GM12878 (cell line): ENCODE measurements at regions of chr4 and their contacts with region 1.

Region 1: GRCh38 chr4:6873792-6874461 is 35.7 kb upstream of the TBC1D14 start:
- DNase-seq: no peak
- ATAC-seq: peak; percentile 96
- H3K4me3 ChIP-seq: no peak overlapping the region
- H3K27ac ChIP-seq: no peak overlapping the region
- H3K4me1 ChIP-seq: no peaks in the 10 kb centered on the region
- H3K27me3 ChIP-seq: no peaks in the 10 kb centered on the region
- CTCF ChIP-seq: peak; percentile 92 to 95 (median 95)
- EP300 ChIP-seq: no peak
- POLR2A ChIP-seq: no peak
- RAD21 ChIP-seq: peak; percentile 96

Region 2: GRCh38 chr4:6673660-6674499 is 200.0 kb before region 1 on chr4:
- CTCF ChIA-PET with region 1: interaction called, 23 read pairs
- POLR2A ChIA-PET with region 1: no interaction called
- RAD21 ChIA-PET with region 1: interaction called, 7 read pairs
- SMC1A ChIA-PET with region 1: interaction called, 6 read pairs
- in situ Hi-C with region 1: no loop called
- intact Hi-C with region 1: no loop called
- DNase-seq: peak; percentile 80
- ATAC-seq: peak; percentile 92
- H3K4me3 ChIP-seq: peak overlapping the region; percentile 74
- H3K27ac ChIP-seq: peak overlapping the region; percentile 45
- H3K4me1 ChIP-seq: peaks cover 6% of the 10 kb centered on the region; the same call in 1 of the 2 replicates
- H3K27me3 ChIP-seq: no peaks in the 10 kb centered on the region
- CTCF ChIP-seq: no peak
- EP300 ChIP-seq: peak in 1 of 2 experiments; percentile 27; a peak in 1 of 4 replicates
- POLR2A ChIP-seq: peak; percentile 92
- RAD21 ChIP-seq: no peak

Region 3: GRCh38 chr4:6723716-6724250 is 150.1 kb before region 1 on chr4:
- CTCF ChIA-PET with region 1: interaction called, 277 read pairs
- POLR2A ChIA-PET with region 1: interaction called, 14 read pairs
- RAD21 ChIA-PET with region 1: interaction called, 155 read pairs
- SMC1A ChIA-PET with region 1: interaction called, 153 read pairs
- in situ Hi-C with region 1: loop called (anchors 5 kb)
- intact Hi-C with region 1: loop called (anchors 1 kb)
- DNase-seq: no peak
- ATAC-seq: no peak
- H3K4me3 ChIP-seq: no peak overlapping the region
- H3K27ac ChIP-seq: no peak overlapping the region
- H3K4me1 ChIP-seq: peaks cover 7% of the 10 kb centered on the region
- H3K27me3 ChIP-seq: no peaks in the 10 kb centered on the region
- CTCF ChIP-seq: no peak
- EP300 ChIP-seq: no peak
- POLR2A ChIP-seq: no peak
- RAD21 ChIP-seq: no peak

Region 4: GRCh38 chr4:6768539-6768905 is 105.4 kb before region 1 on chr4:
- CTCF ChIA-PET with region 1: interaction called, 300 read pairs
- POLR2A ChIA-PET with region 1: interaction called, 4 read pairs
- RAD21 ChIA-PET with region 1: interaction called, 20 read pairs
- SMC1A ChIA-PET with region 1: interaction called, 19 read pairs
- in situ Hi-C with region 1: no loop called
- intact Hi-C with region 1: no loop called
- DNase-seq: no peak
- ATAC-seq: no peak
- H3K4me3 ChIP-seq: no peak overlapping the region
- H3K27ac ChIP-seq: no peak overlapping the region
- H3K4me1 ChIP-seq: peaks cover 14% of the 10 kb centered on the region
- H3K27me3 ChIP-seq: no peaks in the 10 kb centered on the region
- CTCF ChIP-seq: no peak
- EP300 ChIP-seq: no peak
- POLR2A ChIP-seq: no peak
- RAD21 ChIP-seq: no peak

Region 5: GRCh38 chr4:6824772-6825402 is 49.0 kb before region 1 on chr4:
- CTCF ChIA-PET with region 1: interaction called, 8 read pairs
- POLR2A ChIA-PET with region 1: no interaction called
- RAD21 ChIA-PET with region 1: interaction called, 4 read pairs
- SMC1A ChIA-PET with region 1: interaction called, 11 read pairs
- in situ Hi-C with region 1: no loop called
- intact Hi-C with region 1: no loop called
- DNase-seq: no peak
- ATAC-seq: no peak
- H3K4me3 ChIP-seq: no peak overlapping the region
- H3K27ac ChIP-seq: no peak overlapping the region
- H3K4me1 ChIP-seq: 0 out of 2 replicates have a peak, but pooled peaks cover 3% of the 10 kb centered on the region
- H3K27me3 ChIP-seq: no peaks in the 10 kb centered on the region
- CTCF ChIP-seq: no peak
- EP300 ChIP-seq: no peak
- POLR2A ChIP-seq: no peak
- RAD21 ChIP-seq: no peak

Region 6: DNA sequence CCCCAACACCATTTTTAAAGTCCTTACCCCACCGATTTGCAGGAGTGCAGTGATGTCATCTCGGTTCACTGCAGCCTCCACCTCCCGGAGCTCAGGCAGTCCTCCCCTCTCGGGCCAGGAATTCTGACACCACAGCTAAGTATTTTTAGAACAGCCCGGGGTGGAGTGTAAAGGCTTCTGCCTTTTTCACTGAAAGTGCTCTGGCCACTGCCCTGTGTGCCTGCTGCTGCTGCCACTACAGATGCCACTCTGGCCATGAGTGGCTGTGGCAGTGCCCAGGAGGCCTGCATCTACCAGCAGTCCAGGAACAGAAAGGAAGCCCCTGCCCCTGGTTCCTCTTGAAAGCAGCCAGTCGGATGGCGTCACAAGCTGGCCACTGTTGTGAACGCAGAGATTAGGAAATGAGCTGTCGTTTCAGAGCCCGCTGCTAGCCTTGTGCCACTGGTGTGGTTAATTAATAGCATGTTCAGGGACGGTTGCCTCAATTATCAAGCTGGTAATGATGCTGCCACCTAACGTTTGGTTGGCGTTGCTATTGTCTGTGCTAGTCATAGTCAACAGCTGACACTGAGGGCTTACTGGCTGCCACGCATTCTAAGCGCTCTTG is 12.1 kb after region 1 on chr4:
- CTCF ChIA-PET with region 1: interaction called, 64 read pairs
- POLR2A ChIA-PET with region 1: no interaction called
- RAD21 ChIA-PET with region 1: interaction called, 15 read pairs
- SMC1A ChIA-PET with region 1: interaction called, 18 read pairs
- in situ Hi-C with region 1: no loop called
- intact Hi-C with region 1: no loop called
- DNase-seq: peak; percentile 34
- ATAC-seq: peak; percentile 94
- H3K4me3 ChIP-seq: no peak overlapping the region
- H3K27ac ChIP-seq: no peak overlapping the region
- H3K4me1 ChIP-seq: no peaks in the 10 kb centered on the region
- H3K27me3 ChIP-seq: no peaks in the 10 kb centered on the region
- CTCF ChIP-seq: peak; percentile 26 to 51 (median 35); a peak in 4 of 6 replicates
- EP300 ChIP-seq: no peak
- POLR2A ChIP-seq: no peak
- RAD21 ChIP-seq: 0 out of 2 replicates have a peak, but pooled peaks have one; percentile 1

Region 7: GRCh38 chr4:6909073-6909965 is 35.4 kb after region 1 on chr4 and contains the start of gene TBC1D14:
- CTCF ChIA-PET with region 1: interaction called, 13 read pairs
- POLR2A ChIA-PET with region 1: no interaction called
- RAD21 ChIA-PET with region 1: interaction called, 9 read pairs
- SMC1A ChIA-PET with region 1: interaction called, 4 read pairs
- in situ Hi-C with region 1: no loop called
- intact Hi-C with region 1: no loop called
- DNase-seq: no peak
- ATAC-seq: peak; percentile 94
- H3K4me3 ChIP-seq: peak within 1 kb of the TSS; percentile 97
- H3K27ac ChIP-seq: peak within 1 kb of the TSS; percentile 96
- H3K4me1 ChIP-seq: peaks cover 17% of the 10 kb centered on the region
- H3K27me3 ChIP-seq: 0 out of 4 replicates have a peak, but pooled peaks cover 0 to 3% of the 10 kb centered on the region in 2 experiments
- CTCF ChIP-seq: no peak; a peak in 2 of 6 replicates
- EP300 ChIP-seq: no peak
- POLR2A ChIP-seq: peak; percentile 82
- RAD21 ChIP-seq: no peak
- polyA plus RNA-seq, gene TBC1D14: 0.87 to 1.1 TPM

Region 8: GRCh38 chr4:7206911-7207567 is 333.1 kb after region 1 on chr4:
- CTCF ChIA-PET with region 1: no interaction called
- POLR2A ChIA-PET with region 1: no interaction called
- RAD21 ChIA-PET with region 1: no interaction called
- SMC1A ChIA-PET with region 1: no interaction called
- in situ Hi-C with region 1: no loop called
- intact Hi-C with region 1: no loop called
- DNase-seq: no peak
- ATAC-seq: no peak
- H3K4me3 ChIP-seq: no peak overlapping the region
- H3K27ac ChIP-seq: no peak overlapping the region
- H3K4me1 ChIP-seq: no peaks in the 10 kb centered on the region
- H3K27me3 ChIP-seq: peaks cover 0 to 3% of the 10 kb centered on the region in 2 experiments; a peak in 3 of 4 replicates
- CTCF ChIP-seq: no peak
- EP300 ChIP-seq: no peak
- POLR2A ChIP-seq: no peak
- RAD21 ChIP-seq: no peak